WTC11 (cell line): ENCODE measurements at regions of chr22 and their contacts with region 1.

Region 1: DNA sequence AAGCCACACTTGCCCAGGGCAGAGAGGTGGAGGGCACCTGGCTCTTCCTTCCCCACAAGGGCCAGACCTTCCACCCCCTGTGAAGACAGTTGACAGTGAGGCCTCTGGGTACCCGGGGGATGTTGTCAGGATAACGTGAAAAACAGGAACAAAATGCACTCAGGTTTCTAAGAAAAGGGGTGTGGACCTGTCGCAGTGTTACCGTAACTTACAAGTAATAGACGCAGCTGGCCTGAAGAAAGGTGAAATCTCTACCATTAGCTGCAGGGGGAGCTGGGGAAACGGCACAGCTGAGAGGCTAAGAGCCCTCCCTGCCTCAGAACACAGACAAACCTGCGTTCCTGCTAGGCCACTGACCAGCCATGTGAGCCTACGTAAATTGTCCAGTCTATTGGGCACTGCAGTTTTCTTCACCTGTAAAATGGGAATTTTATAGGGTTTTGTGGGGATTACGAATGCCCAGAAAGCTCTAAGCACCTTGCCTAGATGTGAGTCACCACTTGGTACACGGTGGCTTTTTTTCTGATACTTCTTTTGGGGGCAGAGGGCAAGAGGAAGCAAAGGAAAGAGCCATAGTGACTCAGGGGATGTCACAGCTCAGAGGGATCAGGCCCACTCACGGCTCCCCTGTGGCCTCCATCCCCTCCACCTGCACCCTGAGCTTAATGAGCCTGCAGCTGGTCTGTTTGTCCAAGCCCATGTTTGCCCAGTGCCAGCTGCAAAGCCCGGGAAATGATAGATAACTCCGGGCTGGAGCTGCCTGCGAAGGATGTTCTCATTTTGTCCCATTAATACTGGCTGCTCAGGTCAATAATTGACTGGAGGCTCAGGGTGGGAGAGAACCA is 18.4 kb upstream of the CABP7 start:
- DNase-seq: peak; percentile 52
- ATAC-seq: peak; percentile 56
- H3K4me3 Mint-ChIP-seq: no peak overlapping the region
- H3K27ac Mint-ChIP-seq: no peak overlapping the region
- H3K4me1 Mint-ChIP-seq: peaks cover 43% of the 10 kb centered on the region
- H3K27me3 Mint-ChIP-seq: peaks cover 37% of the 10 kb centered on the region
- CTCF ChIP-seq: no peak

Region 2: GRCh38 chr22:29559030-29559429 is 142.3 kb before region 1 on chr22:
- CTCF ChIA-PET with region 1: no interaction called
- POLR2A ChIA-PET with region 1: no interaction called
- DNase-seq: no peak
- ATAC-seq: no peak
- H3K4me3 Mint-ChIP-seq: no peak overlapping the region
- H3K27ac Mint-ChIP-seq: no peak overlapping the region
- H3K4me1 Mint-ChIP-seq: no peaks in the 10 kb centered on the region
- H3K27me3 Mint-ChIP-seq: no peaks in the 10 kb centered on the region
- CTCF ChIP-seq: no peak

Region 3: DNA sequence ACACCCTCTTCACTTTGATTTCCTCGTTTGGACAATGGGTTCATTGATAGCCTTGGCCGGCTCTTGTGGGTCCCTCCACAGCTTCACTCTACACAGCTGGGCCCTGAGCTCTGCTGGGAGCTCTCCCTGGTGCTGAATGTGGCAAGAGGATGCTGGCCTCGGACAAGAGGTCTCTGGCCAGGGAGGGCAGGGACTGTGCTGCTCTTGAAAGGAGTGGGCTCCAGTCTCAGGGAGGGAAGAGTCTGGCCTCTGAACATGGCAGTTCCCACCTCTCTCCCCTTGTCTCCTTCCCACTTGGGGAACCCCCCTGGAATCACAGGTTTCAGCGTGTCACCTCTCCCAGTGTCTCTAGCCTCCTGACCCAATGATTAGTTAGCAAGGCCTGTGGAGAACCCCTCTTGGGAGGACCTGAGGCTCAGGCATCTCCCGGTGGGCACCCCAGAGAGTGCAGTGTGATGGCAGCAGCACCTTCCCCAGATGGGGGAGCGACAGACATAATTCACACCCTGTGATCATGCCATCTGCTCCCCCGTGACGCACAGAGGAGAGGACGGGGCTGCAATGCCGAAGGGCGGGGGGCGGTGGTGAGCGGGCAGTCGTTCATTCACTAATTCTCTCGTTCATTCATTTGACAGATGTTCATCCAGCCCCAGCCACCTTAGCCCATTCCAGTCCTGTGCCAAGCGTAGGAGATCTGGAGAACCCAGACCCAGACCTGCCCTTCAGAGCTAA is 15.6 kb after region 1 on chr22:
- CTCF ChIA-PET with region 1: interaction called, 16 read pairs
- POLR2A ChIA-PET with region 1: no interaction called
- DNase-seq: peak; percentile 89
- ATAC-seq: peak; percentile 79
- H3K4me3 Mint-ChIP-seq: no peak overlapping the region
- H3K27ac Mint-ChIP-seq: no peak overlapping the region
- H3K4me1 Mint-ChIP-seq: peaks cover 3% of the 10 kb centered on the region; the same call in 1 of the 2 replicates
- H3K27me3 Mint-ChIP-seq: peaks cover 50% of the 10 kb centered on the region
- CTCF ChIP-seq: no peak